MCF 10A (cell line): ENCODE measurements at regions of chr2 and their contacts with region 1.

Region 1: GRCh38 chr2:96868555-96869280 is 1.2 kb downstream of the SEMA4C start:
- DNase-seq: peak; percentile 87
- H3K4me3 Mint-ChIP-seq: peak overlapping the region; percentile 78
- H3K27ac Mint-ChIP-seq: peak overlapping the region; percentile 63
- H3K4me1 Mint-ChIP-seq: peaks cover 5% of the 10 kb centered on the region
- H3K27me3 Mint-ChIP-seq: no peaks in the 10 kb centered on the region
- CTCF ChIP-seq: peak; percentile 82

Region 2: GRCh38 chr2:96195410-96196066 is 673.2 kb before region 1 on chr2:
- CTCF ChIA-PET with region 1: no interaction called
- POLR2A ChIA-PET with region 1: no interaction called
- intact Hi-C with region 1: no loop called
- DNase-seq: no peak
- H3K4me3 Mint-ChIP-seq: no peak overlapping the region
- H3K27ac Mint-ChIP-seq: no peak overlapping the region
- H3K4me1 Mint-ChIP-seq: peaks cover 2% of the 10 kb centered on the region
- H3K27me3 Mint-ChIP-seq: no peaks in the 10 kb centered on the region
- CTCF ChIP-seq: no peak

Region 3: DNA sequence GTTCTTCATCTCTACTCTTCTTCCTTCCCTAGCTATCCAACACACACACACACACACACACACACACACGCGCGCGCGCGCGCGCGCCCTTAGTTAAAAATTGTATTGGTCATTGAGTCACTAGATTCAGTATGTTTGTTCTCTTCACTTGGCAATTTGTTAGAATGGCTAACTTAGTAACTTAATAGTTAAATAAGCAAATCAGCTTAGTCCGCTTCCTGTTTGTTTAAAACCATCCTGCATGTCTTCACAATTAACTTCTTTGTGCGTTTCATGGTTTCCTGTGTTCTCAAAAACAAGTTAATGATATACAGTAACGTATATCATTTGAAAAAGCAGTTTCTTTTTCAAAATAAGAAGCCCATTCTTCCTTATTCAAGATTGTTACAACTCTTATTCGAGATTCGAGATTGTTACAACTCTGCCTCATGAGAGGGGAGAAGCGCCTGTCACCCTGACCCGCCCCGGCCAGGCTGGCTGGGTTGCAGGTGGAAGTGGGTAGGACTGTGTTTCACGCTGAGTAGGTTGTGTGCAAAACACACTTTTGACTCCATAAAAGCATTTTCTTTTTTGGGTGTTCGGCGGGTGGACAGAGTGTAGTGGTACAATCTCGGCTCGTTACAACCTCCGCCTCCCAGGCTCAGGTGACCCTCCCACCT is 62.1 kb before region 1 on chr2:
- CTCF ChIA-PET with region 1: no interaction called
- POLR2A ChIA-PET with region 1: no interaction called
- intact Hi-C with region 1: no loop called
- DNase-seq: no peak
- H3K4me3 Mint-ChIP-seq: no peak overlapping the region
- H3K27ac Mint-ChIP-seq: no peak overlapping the region
- H3K4me1 Mint-ChIP-seq: no peaks in the 10 kb centered on the region
- H3K27me3 Mint-ChIP-seq: no peaks in the 10 kb centered on the region
- CTCF ChIP-seq: no peak

Region 4: GRCh38 chr2:96884320-96885094 is 15.8 kb after region 1 on chr2:
- CTCF ChIA-PET with region 1: interaction called, 10 read pairs
- POLR2A ChIA-PET with region 1: interaction called, 7 read pairs
- intact Hi-C with region 1: no loop called
- DNase-seq: peak; percentile 80
- H3K4me3 Mint-ChIP-seq: no peak overlapping the region
- H3K27ac Mint-ChIP-seq: no peak overlapping the region
- H3K4me1 Mint-ChIP-seq: peaks cover 23% of the 10 kb centered on the region
- H3K27me3 Mint-ChIP-seq: no peaks in the 10 kb centered on the region
- CTCF ChIP-seq: no peak

Region 5: DNA sequence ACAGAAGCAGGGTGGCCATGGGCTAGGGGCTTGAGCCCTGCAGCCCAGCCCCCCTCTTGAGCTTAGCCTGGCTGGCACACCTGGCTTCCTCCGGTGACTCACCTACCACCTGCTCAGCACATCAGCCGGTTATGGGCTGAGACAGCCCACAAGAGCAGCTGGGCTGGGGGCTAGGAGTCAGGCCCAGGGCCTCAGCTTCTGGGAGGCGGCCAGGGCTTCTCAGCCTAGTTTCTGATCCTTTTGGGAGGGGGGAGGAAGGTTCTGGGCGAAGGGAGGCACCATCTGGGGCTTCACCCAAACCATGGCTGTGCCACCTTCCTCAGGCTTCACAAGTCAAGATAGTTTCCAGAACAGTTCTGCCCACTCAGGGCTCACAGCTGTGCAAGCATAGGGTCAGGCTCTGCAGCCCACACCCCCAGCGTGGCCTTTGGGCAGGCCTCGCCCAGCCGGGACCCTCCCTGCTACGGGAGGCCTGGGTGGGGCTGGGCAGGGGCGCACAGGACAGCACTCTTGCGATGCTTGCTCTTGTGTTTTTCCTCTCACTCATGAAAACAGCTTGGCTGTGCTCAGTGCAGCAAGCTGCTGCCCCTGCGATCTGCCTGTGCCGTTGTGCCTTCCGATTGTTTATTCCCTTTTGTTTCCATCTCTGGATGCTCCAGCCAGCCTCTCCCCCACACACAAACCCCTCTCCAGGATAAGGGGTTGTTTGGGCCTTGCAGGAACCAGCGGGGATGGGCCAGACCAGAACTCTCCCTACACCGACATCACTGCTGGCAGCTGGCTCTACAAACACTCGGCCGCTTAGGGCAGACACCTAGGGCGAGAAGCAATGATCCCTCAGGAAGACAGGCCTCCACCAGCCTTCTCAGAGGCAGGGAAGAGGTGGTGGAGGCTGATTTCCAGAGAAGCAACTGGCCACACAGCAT is 27.3 kb after region 1 on chr2:
- CTCF ChIA-PET with region 1: no interaction called
- POLR2A ChIA-PET with region 1: interaction called, 11 read pairs
- intact Hi-C with region 1: no loop called
- DNase-seq: peak; percentile 73
- H3K4me3 Mint-ChIP-seq: no peak overlapping the region
- H3K27ac Mint-ChIP-seq: no peak overlapping the region
- H3K4me1 Mint-ChIP-seq: peaks cover 51% of the 10 kb centered on the region
- H3K27me3 Mint-ChIP-seq: no peaks in the 10 kb centered on the region
- CTCF ChIP-seq: no peak

Region 6: GRCh38 chr2:96916156-96916630 is 47.5 kb after region 1 on chr2:
- CTCF ChIA-PET with region 1: interaction called, 4 read pairs
- POLR2A ChIA-PET with region 1: interaction called, 7 read pairs
- intact Hi-C with region 1: loop called (anchors 2 kb)
- DNase-seq: peak; percentile 51
- H3K4me3 Mint-ChIP-seq: peak overlapping the region; percentile 63
- H3K27ac Mint-ChIP-seq: no peak overlapping the region
- H3K4me1 Mint-ChIP-seq: peaks cover 34% of the 10 kb centered on the region
- H3K27me3 Mint-ChIP-seq: peaks cover 18% of the 10 kb centered on the region
- CTCF ChIP-seq: no peak

Region 7: GRCh38 chr2:97774425-97774824 is 905.7 kb after region 1 on chr2:
- CTCF ChIA-PET with region 1: no interaction called
- POLR2A ChIA-PET with region 1: no interaction called
- intact Hi-C with region 1: no loop called
- DNase-seq: peak; percentile 19
- H3K4me3 Mint-ChIP-seq: no peak overlapping the region
- H3K27ac Mint-ChIP-seq: no peak overlapping the region
- H3K4me1 Mint-ChIP-seq: no peaks in the 10 kb centered on the region
- H3K27me3 Mint-ChIP-seq: no peaks in the 10 kb centered on the region
- CTCF ChIP-seq: peak; percentile 28